Calu3 (cell line): ENCODE measurements at regions of chr4 and their contacts with region 1.

Region 1: GRCh38 chr4:177250056-177250696 is 59.5 kb upstream of the NEIL3 start:
- DNase-seq: peak; percentile 74
- H3K4me3 Mint-ChIP-seq: no peak overlapping the region
- H3K27ac Mint-ChIP-seq: no peak overlapping the region
- H3K4me1 Mint-ChIP-seq: peaks cover 8% of the 10 kb centered on the region
- H3K27me3 Mint-ChIP-seq: no peaks in the 10 kb centered on the region
- CTCF ChIP-seq: peak; percentile 76

Region 2: GRCh38 chr4:177108708-177109107 is 141.5 kb before region 1 on chr4:
- CTCF ChIA-PET with region 1: no interaction called
- intact Hi-C with region 1: loop called (anchors 10 kb)
- DNase-seq: no peak
- H3K4me3 Mint-ChIP-seq: no peak overlapping the region
- H3K27ac Mint-ChIP-seq: no peak overlapping the region
- H3K4me1 Mint-ChIP-seq: no peaks in the 10 kb centered on the region
- H3K27me3 Mint-ChIP-seq: no peaks in the 10 kb centered on the region
- CTCF ChIP-seq: no peak

Region 3: GRCh38 chr4:177214935-177215334 is 35.2 kb before region 1 on chr4:
- CTCF ChIA-PET with region 1: no interaction called
- intact Hi-C with region 1: no loop called
- DNase-seq: no peak
- H3K4me3 Mint-ChIP-seq: no peak overlapping the region
- H3K27ac Mint-ChIP-seq: no peak overlapping the region
- H3K4me1 Mint-ChIP-seq: no peaks in the 10 kb centered on the region
- H3K27me3 Mint-ChIP-seq: no peaks in the 10 kb centered on the region
- CTCF ChIP-seq: no peak

Region 4: DNA sequence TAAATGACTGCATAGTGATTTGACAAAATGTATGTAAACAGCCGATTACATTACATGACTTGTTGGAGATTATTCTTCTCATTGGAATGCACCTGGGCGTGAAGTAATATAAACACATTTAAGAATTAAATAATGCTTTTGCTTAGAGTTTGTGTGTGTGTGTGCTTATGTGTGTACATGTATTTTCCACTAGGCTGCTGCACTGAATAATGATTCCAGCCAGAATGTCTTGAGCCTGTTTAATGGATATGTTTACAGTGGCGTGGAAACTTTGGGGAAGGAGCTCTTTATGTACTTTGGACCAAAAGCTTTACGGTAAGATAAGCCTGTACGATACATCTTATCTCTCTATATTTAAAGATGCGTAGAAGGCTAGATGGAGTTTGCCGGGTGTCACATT is 72.1 kb after region 1 on chr4:
- CTCF ChIA-PET with region 1: no interaction called
- intact Hi-C with region 1: loop called (anchors 5 kb)
- DNase-seq: no peak
- H3K4me3 Mint-ChIP-seq: peak overlapping the region; percentile 32
- H3K27ac Mint-ChIP-seq: no peak overlapping the region
- H3K4me1 Mint-ChIP-seq: peaks cover 36% of the 10 kb centered on the region
- H3K27me3 Mint-ChIP-seq: no peaks in the 10 kb centered on the region
- CTCF ChIP-seq: no peak

Region 5: DNA sequence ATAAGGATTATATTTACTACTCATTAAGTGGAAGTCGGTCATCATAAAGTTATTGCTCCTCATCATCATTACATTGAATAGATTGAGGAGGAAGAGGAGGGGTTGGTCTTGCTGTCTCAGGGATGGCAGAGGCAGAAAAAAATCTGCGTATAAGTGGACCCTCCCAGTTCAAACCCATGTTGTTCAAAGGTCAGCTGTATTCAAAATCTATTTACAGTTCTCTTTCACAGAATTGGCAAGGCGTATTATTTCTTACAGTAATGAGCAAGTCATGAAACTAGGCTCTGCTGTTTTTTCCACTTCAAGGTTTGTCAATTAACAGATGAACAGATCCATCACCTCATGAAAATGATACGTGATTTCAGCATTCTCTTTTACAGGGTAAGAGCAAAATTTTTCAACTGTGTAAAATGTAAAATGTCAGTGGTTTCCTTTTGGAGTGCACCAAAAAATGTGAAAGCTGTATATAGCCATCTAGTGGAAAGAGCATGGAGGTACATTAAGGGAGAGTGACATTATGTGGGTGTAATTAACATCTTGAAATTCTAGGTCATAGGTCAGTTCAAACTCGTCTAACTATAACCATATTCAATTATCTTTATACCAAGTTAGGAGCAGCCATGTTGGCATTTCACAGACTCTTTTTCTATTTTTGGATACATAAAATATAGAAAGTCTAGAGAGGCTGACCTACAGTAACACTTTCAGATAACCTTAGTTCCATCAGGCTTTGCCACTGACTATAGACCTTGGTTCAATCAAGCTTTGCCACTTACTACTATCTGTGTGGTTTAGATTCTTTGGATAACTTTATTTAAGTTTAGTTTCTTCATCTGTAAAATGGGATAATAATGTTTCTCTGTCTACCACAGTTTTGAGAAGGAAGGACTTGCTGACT is 89.5 kb after region 1 on chr4:
- CTCF ChIA-PET with region 1: interaction called, 4 read pairs
- intact Hi-C with region 1: loop called (anchors 1 kb)
- DNase-seq: no peak
- H3K4me3 Mint-ChIP-seq: no peak overlapping the region
- H3K27ac Mint-ChIP-seq: no peak overlapping the region
- H3K4me1 Mint-ChIP-seq: no peaks in the 10 kb centered on the region
- H3K27me3 Mint-ChIP-seq: no peaks in the 10 kb centered on the region
- CTCF ChIP-seq: peak; percentile 27

Region 6: GRCh38 chr4:177546745-177547144 is 296.6 kb after region 1 on chr4:
- CTCF ChIA-PET with region 1: no interaction called
- intact Hi-C with region 1: loop called (anchors 5 kb)
- DNase-seq: no peak
- H3K4me3 Mint-ChIP-seq: no peak overlapping the region
- H3K27ac Mint-ChIP-seq: no peak overlapping the region
- H3K4me1 Mint-ChIP-seq: no peaks in the 10 kb centered on the region
- H3K27me3 Mint-ChIP-seq: no peaks in the 10 kb centered on the region
- CTCF ChIP-seq: no peak

Region 7: GRCh38 chr4:177855507-177856197 is 605.5 kb after region 1 on chr4:
- CTCF ChIA-PET with region 1: no interaction called
- intact Hi-C with region 1: no loop called
- DNase-seq: no peak
- H3K4me3 Mint-ChIP-seq: no peak overlapping the region
- H3K27ac Mint-ChIP-seq: no peak overlapping the region
- H3K4me1 Mint-ChIP-seq: no peaks in the 10 kb centered on the region
- H3K27me3 Mint-ChIP-seq: no peaks in the 10 kb centered on the region
- CTCF ChIP-seq: no peak